OCI-LY7 (cell line): ENCODE measurements at regions of chr14 and their contacts with region 1.

Region 1: GRCh38 chr14:51759950-51760349 is 100.5 kb upstream of the GNG2 start:
- DNase-seq: no peak
- H3K4me3 ChIP-seq: no peak overlapping the region
- H3K27ac ChIP-seq: no peak overlapping the region
- H3K4me1 ChIP-seq: no peaks in the 10 kb centered on the region
- CTCF ChIP-seq: no peak

Region 2: DNA sequence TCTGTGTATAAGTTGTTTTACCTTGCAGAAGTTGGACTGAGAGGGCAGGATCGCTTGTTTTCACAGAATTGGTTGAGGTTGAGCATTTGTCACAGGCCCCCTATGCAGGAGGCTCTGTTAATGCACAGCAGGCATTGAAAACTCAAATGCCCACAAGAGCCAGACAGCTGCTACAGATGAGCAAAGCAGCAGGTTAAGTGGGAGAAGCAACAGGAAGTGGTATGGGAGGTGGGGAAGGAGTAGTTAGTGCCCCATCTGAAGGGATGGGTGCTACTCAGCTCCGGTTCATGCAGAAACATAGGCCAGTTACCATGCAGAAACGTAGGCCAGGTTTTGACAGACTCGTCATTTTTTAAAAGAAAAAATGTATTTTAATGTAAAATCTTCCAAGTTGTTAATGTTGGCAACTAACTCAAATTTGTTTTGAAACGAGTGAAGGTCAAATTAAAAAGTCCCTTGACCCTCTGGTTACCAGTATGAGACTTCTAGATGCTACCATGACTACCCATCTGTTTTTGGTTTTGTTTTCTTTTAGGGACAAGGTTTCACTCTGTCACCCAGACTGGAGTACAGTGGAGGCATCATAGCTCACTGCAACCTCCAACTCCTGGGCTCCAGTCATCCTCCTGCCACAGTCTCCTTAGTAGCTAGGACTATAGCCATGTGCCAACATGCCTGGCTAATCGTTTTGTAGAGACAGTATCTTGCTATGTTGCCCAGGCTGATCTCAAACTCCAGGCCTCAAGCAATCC is 192.9 kb before region 1 on chr14:
- CTCF ChIA-PET with region 1: no interaction called
- POLR2A ChIA-PET with region 1: no interaction called
- intact Hi-C with region 1: no loop called
- DNase-seq: no peak
- H3K4me3 ChIP-seq: no peak overlapping the region
- H3K27ac ChIP-seq: no peak overlapping the region
- H3K4me1 ChIP-seq: no peaks in the 10 kb centered on the region
- CTCF ChIP-seq: no peak

Region 3: GRCh38 chr14:51593397-51593796 is 166.6 kb before region 1 on chr14:
- CTCF ChIA-PET with region 1: no interaction called
- POLR2A ChIA-PET with region 1: interaction called, 14 read pairs
- intact Hi-C with region 1: no loop called
- DNase-seq: no peak
- H3K4me3 ChIP-seq: no peak overlapping the region
- H3K27ac ChIP-seq: no peak overlapping the region
- H3K4me1 ChIP-seq: no peaks in the 10 kb centered on the region
- CTCF ChIP-seq: no peak

Region 4: GRCh38 chr14:51846631-51847488 is 86.9 kb after region 1 on chr14:
- CTCF ChIA-PET with region 1: no interaction called
- POLR2A ChIA-PET with region 1: no interaction called
- intact Hi-C with region 1: no loop called
- DNase-seq: peak; percentile 96
- H3K4me3 ChIP-seq: peak overlapping the region; percentile 66
- H3K27ac ChIP-seq: peak overlapping the region; percentile 97
- H3K4me1 ChIP-seq: peaks cover 69% of the 10 kb centered on the region
- CTCF ChIP-seq: no peak; the same call in 1 of the 2 replicates

Region 5: DNA sequence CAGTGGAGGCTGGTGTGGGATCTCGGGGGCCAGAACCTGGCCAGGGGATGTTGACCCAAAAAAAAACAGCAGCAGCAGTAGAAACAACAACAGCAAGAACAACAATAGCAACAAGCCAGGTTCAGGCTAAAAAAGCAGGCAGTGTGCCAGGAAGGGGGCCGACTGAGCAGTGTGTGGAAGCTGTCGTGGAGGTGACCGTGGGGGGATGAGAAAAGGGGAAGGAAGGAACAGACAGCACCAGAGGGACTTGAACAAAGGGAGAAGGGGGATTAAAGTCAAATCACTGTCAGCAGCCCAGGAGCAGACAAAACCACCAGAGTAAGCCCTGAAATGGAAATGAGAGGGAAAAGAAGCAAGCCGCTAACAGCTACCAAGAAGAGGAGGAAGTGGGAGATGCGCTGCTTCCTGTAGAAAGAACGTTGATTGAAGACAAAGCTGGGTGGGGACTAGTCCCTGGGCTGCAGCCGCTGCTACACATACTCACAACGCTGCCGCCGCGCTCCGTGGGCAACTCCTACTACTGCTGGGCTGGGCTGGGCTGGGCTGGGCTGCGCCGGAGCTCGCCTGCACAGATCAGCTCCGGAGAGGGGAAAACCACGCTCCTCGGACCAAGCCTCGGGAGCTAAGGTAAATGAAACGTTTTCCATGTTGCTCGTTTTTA is 100.3 kb after region 1 on chr14 and contains the start of gene GNG2:
- CTCF ChIA-PET with region 1: no interaction called
- POLR2A ChIA-PET with region 1: no interaction called
- intact Hi-C with region 1: no loop called
- DNase-seq: peak; percentile 89
- H3K4me3 ChIP-seq: peak within 1 kb of the TSS; percentile 70
- H3K27ac ChIP-seq: peak within 1 kb of the TSS; percentile 59
- H3K4me1 ChIP-seq: peaks cover 28% of the 10 kb centered on the region
- CTCF ChIP-seq: no peak
- total RNA-seq, gene GNG2: 22.3 and 24.0 TPM in 2 replicates